ENCODE measurements at regions of chr12 and their contacts with region 1.

Region 1: GRCh38 chr12:77324763-77325468 is 259.5 kb upstream of the E2F7 start:
- DNase-seq: peak; percentile 75
- H3K4me3 Mint-ChIP-seq: peak overlapping the region; percentile 91
- H3K27ac Mint-ChIP-seq: peak overlapping the region; percentile 53
- H3K4me1 Mint-ChIP-seq: peaks cover 14% of the 10 kb centered on the region
- H3K27me3 Mint-ChIP-seq: peaks cover 13% of the 10 kb centered on the region
- CTCF ChIP-seq: peak; percentile 31

Region 2: DNA sequence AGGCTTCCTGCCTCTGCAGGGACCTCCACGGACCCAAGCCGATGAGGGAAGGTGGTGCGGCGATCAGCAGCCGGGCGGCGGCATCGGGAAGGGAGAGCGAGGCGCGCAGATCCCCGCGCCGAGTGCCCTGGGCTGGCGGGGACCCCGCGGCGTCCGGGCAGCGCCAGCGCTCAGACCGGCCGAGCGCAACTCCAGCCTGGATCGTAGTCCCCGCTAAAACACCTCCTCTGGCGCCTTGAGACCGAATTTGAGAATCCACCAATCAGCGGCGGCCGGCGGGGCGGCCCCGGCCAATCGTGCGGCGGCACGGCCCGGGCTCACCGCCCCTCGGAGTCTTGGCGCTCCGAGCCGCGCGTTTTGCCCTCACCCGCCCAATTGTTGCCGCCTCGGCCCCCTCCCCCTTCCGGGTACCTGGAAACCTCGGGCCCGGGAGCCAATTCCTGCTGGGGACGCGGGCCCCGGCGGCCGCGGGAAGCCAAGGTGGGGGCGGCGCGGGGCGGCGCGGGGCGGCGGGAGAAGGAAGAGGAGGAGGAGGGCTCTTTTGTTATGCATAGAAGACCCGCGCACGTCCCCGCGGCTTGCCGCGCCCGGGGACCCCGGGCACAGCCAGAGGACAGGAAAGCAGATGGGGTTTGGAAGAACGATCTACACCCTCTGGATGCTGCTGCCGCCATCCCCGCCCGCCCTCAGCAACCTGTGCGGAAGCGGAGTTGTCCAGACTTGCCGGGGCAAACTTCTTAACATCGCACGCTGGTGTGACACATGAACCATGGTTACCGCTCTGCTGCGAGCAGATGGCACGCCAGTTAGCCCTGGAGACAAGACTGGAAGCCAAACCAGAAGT is 259.3 kb before region 1 on chr12 and contains the start of gene E2F7:
- CTCF ChIA-PET with region 1: interaction called, 3 read pairs
- POLR2A ChIA-PET with region 1: no interaction called
- intact Hi-C with region 1: loop called (anchors 5 kb)
- DNase-seq: peak; percentile 94
- H3K4me3 Mint-ChIP-seq: peak within 1 kb of the TSS; percentile 69
- H3K27ac Mint-ChIP-seq: peak within 1 kb of the TSS; percentile 77
- H3K4me1 Mint-ChIP-seq: peaks cover 37% of the 10 kb centered on the region
- H3K27me3 Mint-ChIP-seq: no peaks in the 10 kb centered on the region
- CTCF ChIP-seq: no peak
- total RNA-seq, gene E2F7: 23.5 and 34.4 TPM in 2 replicates

Region 3: GRCh38 chr12:77314378-77315052 is 10.4 kb before region 1 on chr12:
- CTCF ChIA-PET with region 1: interaction called, 34 read pairs
- POLR2A ChIA-PET with region 1: no interaction called
- intact Hi-C with region 1: no loop called
- DNase-seq: no peak
- H3K4me3 Mint-ChIP-seq: no peak overlapping the region
- H3K27ac Mint-ChIP-seq: no peak overlapping the region
- H3K4me1 Mint-ChIP-seq: no peaks in the 10 kb centered on the region
- H3K27me3 Mint-ChIP-seq: no peaks in the 10 kb centered on the region
- CTCF ChIP-seq: no peak

Measured in MCF 10A (cell line).